H1 (cell line): ENCODE measurements at regions of chr22 and their contacts with region 1.

Region 1: DNA sequence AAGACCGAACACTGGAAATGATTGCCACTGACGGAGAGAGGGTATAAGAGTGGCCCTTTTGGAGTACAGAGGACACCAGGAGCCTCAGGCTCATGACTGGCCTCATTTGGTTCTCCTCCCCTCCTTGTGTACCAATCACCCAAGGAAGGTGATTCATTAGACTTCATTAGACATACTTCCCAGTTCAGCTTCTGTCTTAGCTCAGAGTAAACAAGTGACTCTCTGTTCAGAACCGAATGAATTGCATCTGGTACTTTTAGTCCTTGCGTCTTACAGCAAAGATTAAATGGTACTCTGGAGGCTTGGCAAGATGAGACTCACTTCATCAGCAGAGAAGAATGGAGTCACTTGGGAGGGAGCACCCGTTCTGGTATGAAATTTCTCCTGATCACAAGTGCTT is 75.2 kb downstream of the ZNRF3 start:
- DNase-seq: no peak
- H3K4me3 ChIP-seq: no peak overlapping the region
- H3K27ac ChIP-seq: no peak overlapping the region
- H3K4me1 ChIP-seq: peaks cover 2 to 11% (median 4%) of the 10 kb centered on the region in 4 experiments
- H3K27me3 ChIP-seq: no peaks in the 10 kb centered on the region
- CTCF ChIP-seq: no peak
- EP300 ChIP-seq: no peak
- POLR2A ChIP-seq: no peak
- RAD21 ChIP-seq: no peak

Region 2: GRCh38 chr22:28969401-28970168 is 11.0 kb after region 1 on chr22:
- CTCF ChIA-PET with region 1: interaction called, 3 read pairs
- POLR2A ChIA-PET with region 1: interaction called, 14 read pairs
- DNase-seq: no peak
- H3K4me3 ChIP-seq: no peak overlapping the region
- H3K27ac ChIP-seq: no peak overlapping the region
- H3K4me1 ChIP-seq: peaks cover 3 to 13% (median 5%) of the 10 kb centered on the region in 4 experiments
- H3K27me3 ChIP-seq: no peaks in the 10 kb centered on the region
- CTCF ChIP-seq: no peak
- EP300 ChIP-seq: no peak
- POLR2A ChIP-seq: no peak
- RAD21 ChIP-seq: no peak